Breast epithelium (tissue), 4 donors: ENCODE measurements at regions of chr18 and their contacts with region 1.

Region 1: DNA sequence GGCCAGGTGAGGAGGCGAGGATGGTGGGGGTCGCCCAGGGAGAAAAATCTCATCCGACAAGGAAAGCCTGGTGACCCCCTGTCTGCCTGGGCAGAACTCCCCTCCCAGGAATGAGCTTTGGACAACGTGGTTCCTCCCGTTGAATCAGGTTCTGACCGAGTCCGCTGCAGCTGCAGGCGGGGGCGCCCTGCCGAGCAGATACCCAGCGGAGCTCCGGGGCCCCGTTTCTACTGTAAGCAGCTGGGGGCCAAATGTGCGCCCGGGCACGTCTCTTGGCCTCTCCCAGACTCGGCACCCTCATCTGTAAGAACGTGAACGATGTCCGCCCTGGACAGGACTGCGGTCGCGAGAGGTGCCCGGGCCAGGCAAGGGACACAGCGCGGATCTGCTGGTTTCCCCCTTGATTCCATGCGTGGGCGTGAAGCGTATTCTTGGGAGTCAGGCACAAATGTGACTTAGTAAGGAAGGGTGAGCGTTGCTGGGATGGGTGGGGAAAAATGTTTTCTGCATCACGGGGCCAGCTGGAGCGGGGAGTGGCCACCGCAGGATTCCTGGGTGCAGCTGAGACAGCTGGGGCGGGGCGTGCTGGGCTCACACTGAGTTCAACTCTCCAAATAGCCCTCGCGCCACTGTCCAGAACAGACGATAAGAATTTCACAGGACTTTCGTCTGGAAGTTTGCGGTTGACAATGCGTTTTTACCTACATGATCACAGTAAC is 20.2 kb upstream of the TUBB6 start:
- DNase-seq: peak; percentile 71 to 90
- H3K4me3 ChIP-seq: peak overlapping the region; percentile 40 to 67 (median 52)
- H3K27ac ChIP-seq: peak overlapping the region; percentile 79 to 81
- H3K4me1 ChIP-seq: peaks cover 0 to 5% of the 10 kb centered on the region in 2 donors
- H3K27me3 ChIP-seq: no peaks in the 10 kb centered on the region
- CTCF ChIP-seq: no peak
- POLR2A ChIP-seq: peak; percentile 19

Region 2: GRCh38 chr18:11071300-11071699 is 1216.5 kb before region 1 on chr18:
- intact Hi-C with region 1: no loop called
- DNase-seq: no peak
- H3K4me3 ChIP-seq: no peak overlapping the region
- H3K27ac ChIP-seq: no peak overlapping the region
- H3K4me1 ChIP-seq: no peaks in the 10 kb centered on the region
- H3K27me3 ChIP-seq: no peaks in the 10 kb centered on the region
- CTCF ChIP-seq: no peak
- POLR2A ChIP-seq: no peak

Region 3: DNA sequence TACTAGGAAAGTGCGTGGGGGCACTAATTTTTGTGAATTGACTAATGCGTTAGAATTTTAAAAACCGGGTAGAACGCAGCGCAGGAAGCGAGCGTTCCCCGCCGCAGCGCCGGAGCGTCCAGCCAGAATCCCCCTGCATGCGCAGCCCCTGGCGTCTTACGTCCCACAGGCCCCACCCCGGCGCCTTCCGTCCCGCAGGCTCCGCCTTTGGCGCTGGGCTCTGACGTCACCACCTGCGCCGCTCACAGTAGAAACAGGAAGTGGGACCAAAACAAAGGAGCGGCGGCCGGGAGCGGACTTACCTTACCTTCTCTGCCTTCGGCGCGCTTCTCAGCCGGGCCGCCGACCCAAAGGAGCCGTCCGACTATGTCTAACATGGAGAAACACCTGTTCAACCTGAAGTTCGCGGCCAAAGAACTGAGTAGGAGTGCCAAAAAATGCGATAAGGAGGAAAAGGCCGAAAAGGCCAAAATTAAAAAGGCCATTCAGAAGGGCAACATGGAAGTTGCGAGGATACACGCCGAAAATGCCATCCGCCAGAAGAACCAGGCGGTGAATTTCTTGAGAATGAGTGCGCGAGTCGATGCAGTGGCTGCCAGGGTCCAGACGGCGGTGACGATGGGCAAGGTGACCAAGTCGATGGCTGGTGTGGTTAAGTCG is 436.6 kb before region 1 on chr18 and contains the start of gene CHMP1B:
- intact Hi-C with region 1: no loop called
- DNase-seq: peak; percentile 97 to 98
- H3K4me3 ChIP-seq: peak within 1 kb of the TSS; percentile 85 to 95 (median 90)
- H3K27ac ChIP-seq: peak within 1 kb of the TSS; percentile 94 to 99
- H3K4me1 ChIP-seq: peaks cover 0 to 5% of the 10 kb centered on the region in 2 donors
- H3K27me3 ChIP-seq: no peaks in the 10 kb centered on the region
- CTCF ChIP-seq: no peak
- POLR2A ChIP-seq: peak; percentile 96
- total RNA-seq, gene CHMP1B: 41.0 to 63.4 (median 44.8) TPM

Region 4: DNA sequence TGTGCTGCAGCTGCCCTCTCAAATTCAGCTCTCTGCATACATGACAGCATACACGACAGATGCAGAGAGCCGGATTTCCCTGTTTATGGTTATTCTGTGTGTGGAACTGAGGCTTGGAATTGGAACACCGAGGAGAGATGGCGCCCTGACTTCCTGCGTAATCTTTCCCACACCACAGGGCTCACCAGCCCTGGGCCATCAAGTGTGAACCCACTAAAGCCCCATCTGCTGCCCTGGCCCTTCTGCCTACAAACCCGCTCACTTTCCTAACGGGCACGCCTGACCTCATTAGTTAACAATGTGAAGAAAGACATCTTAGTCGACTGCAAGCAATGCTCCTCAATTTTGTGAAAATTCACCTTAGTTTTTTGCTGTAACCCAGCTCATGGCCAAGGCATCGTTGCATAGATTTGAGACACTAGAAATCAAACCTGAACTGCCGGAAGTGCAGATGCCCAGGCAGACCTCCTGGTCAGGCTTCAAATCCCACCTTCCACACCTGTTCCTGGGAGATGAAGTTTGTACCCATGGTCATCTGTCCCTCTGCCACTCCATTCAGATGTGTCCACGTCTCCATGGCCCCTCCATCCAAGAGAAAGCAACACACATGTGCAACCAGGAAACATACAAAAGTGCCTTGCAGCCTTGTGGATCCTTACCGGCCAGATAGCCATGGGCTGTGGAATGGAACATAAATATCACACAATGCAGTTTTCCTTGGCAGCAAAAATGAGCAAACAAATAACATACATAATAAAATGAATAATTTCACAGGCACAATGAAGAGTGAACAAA is 38.7 kb before region 1 on chr18:
- intact Hi-C with region 1: loop called (anchors 1 kb)
- DNase-seq: no peak
- H3K4me3 ChIP-seq: no peak overlapping the region
- H3K27ac ChIP-seq: no peak overlapping the region
- H3K4me1 ChIP-seq: peaks cover 0 to 7% of the 10 kb centered on the region in 2 donors
- H3K27me3 ChIP-seq: peaks cover 0 to 25% of the 10 kb centered on the region in 2 donors
- CTCF ChIP-seq: no peak
- POLR2A ChIP-seq: no peak